Adrenal gland (tissue), 19 donors: ENCODE measurements at regions of chr9 and their contacts with region 1.

Region 1: DNA sequence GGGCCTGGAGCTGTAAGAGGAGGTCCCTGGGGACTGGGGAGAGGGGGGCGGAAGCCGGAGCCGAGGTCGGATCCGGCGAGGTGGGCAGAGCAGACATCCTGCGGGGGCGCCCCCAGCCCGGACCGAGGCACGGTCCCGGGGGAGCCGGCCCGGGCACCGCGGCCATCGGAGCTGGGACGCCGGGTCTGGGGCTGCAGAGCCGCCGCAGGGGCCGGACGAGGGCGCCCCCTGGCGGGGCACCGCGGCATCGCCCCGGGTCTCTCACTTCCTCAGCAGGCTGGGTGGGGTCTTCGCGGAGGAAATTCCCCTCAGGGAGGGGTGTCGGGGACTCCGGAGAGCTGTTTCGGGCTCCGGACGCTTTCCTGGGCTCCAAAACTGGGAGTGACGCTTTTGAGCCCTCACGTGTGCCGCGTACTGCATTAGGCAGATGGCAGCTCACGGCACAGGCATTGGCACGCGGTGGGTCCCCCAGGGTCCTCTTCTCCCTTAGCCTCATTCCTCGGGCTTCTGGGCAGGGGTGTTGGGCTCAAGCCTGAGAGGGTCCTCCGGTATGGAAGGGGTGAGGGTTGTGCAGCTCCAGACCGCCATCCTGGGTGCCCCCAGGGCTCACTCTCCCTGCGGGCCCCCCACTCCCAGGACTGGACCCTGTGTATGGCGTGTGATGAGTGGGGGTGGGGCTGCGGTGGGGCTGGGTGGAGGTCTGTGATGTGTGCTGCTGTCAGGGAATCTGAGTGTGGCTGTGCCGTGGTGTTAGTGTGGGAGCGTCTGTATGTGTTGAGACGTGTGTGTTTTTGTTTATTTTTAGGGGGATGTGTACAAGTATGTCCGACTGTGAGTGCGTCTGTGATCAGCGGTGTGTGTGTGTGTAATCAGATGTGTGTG is 29.6 kb downstream of the LHX2 start:
- DNase-seq: peak in 6 of 7 donors; percentile 43 to 64 (median 58)
- H3K4me3 ChIP-seq: peak overlapping the region in 2 of 4 donors; percentile 16 to 59
- H3K27ac ChIP-seq: no peak overlapping the region
- H3K4me1 ChIP-seq: peaks cover 10 to 16% of the 10 kb centered on the region in 2 donors
- H3K27me3 ChIP-seq: peaks cover 29% of the 10 kb centered on the region
- CTCF ChIP-seq: peak; percentile 59 to 99 (median 86)
- POLR2A ChIP-seq: no peak

Region 2: GRCh38 chr9:123544007-123544827 is 497.0 kb before region 1 on chr9:
- intact Hi-C with region 1: loop called (anchors 2 to 5 kb)
- DNase-seq: peak in 3 of 7 donors; percentile 35 to 62 (median 45)
- H3K4me3 ChIP-seq: no peak overlapping the region
- H3K27ac ChIP-seq: no peak overlapping the region
- H3K4me1 ChIP-seq: no peaks in the 10 kb centered on the region
- H3K27me3 ChIP-seq: no peaks in the 10 kb centered on the region
- CTCF ChIP-seq: peak; percentile 71 to 92 (median 84)
- POLR2A ChIP-seq: no peak

Region 3: GRCh38 chr9:123710299-123710698 is 330.9 kb before region 1 on chr9:
- intact Hi-C with region 1: loop called in 1 of 2 experiments (anchors 10 kb)
- DNase-seq: peak in 1 of 7 donors; percentile 25
- H3K4me3 ChIP-seq: no peak overlapping the region
- H3K27ac ChIP-seq: no peak overlapping the region
- H3K4me1 ChIP-seq: no peaks in the 10 kb centered on the region
- H3K27me3 ChIP-seq: no peaks in the 10 kb centered on the region
- CTCF ChIP-seq: no peak
- POLR2A ChIP-seq: no peak

Region 4: GRCh38 chr9:124110307-124110915 is 69.2 kb after region 1 on chr9:
- intact Hi-C with region 1: no loop called
- DNase-seq: peak; percentile 46 to 77 (median 69)
- H3K4me3 ChIP-seq: no peak overlapping the region
- H3K27ac ChIP-seq: no peak overlapping the region
- H3K4me1 ChIP-seq: no peaks in the 10 kb centered on the region
- H3K27me3 ChIP-seq: no peaks in the 10 kb centered on the region
- CTCF ChIP-seq: no peak
- POLR2A ChIP-seq: no peak

Region 5: GRCh38 chr9:124239249-124240073 is 198.3 kb after region 1 on chr9:
- intact Hi-C with region 1: no loop called
- DNase-seq: no peak
- H3K4me3 ChIP-seq: no peak overlapping the region
- H3K27ac ChIP-seq: no peak overlapping the region
- H3K4me1 ChIP-seq: no peaks in the 10 kb centered on the region
- H3K27me3 ChIP-seq: no peaks in the 10 kb centered on the region
- CTCF ChIP-seq: no peak
- POLR2A ChIP-seq: no peak